Calu3 (cell line): ENCODE measurements at regions of chr18 and their contacts with region 1.

Region 1: GRCh38 chr18:8960740-8961657 is 141.5 kb upstream of the NDUFV2 start:
- DNase-seq: peak; percentile 51
- H3K4me3 Mint-ChIP-seq: peak overlapping the region; percentile 35
- H3K27ac Mint-ChIP-seq: peak overlapping the region; percentile 96
- H3K4me1 Mint-ChIP-seq: peaks cover 60% of the 10 kb centered on the region
- H3K27me3 Mint-ChIP-seq: no peaks in the 10 kb centered on the region
- CTCF ChIP-seq: no peak

Region 2: DNA sequence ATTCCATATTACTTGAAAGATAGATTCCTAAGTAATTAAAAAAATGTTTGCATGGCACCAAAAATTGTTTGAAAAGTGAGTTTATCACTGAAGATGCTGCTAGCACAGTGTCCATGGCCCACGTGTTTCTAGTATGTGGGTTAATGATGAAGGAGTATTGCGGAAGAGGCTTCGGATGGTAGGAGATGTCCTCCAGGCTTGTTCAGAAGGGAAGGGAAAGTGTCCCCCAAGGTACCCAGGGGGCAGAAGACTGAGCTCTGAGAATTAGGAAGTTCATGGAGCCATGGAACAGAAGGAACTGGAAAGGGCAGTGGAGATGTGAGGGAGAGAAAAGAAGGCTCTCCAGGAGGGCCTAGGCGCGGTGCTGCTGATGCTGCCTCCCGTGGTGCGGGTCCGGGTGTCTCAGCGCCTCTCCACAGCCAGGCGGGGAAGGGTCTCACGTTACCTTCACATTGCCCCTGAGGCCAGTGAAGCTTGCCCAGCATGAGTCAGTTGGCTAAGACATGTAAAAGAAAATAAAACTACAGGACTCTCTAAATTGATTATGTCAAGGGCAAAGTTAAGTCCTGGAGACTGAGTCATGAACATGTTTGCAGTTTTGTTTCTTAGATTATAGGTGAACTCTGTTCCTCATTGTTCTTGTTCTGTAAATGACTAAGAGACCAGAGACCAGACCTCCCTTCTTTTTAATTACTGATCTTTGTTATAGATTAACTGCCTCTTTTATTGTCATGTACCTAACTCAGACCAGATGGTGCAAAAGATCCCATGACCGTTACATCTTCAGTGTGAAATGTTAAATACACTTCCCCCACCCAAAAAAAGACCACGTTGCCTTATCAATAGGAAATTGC is 166.6 kb before region 1 on chr18:
- CTCF ChIA-PET with region 1: no interaction called
- intact Hi-C with region 1: loop called (anchors 2 kb)
- DNase-seq: peak; percentile 43
- H3K4me3 Mint-ChIP-seq: peak overlapping the region; percentile 7
- H3K27ac Mint-ChIP-seq: peak overlapping the region; percentile 90
- H3K4me1 Mint-ChIP-seq: peaks cover 89% of the 10 kb centered on the region
- H3K27me3 Mint-ChIP-seq: no peaks in the 10 kb centered on the region
- CTCF ChIP-seq: no peak

Region 3: GRCh38 chr18:8890957-8891464 is 70.0 kb before region 1 on chr18:
- CTCF ChIA-PET with region 1: no interaction called
- intact Hi-C with region 1: loop called (anchors 2 kb)
- DNase-seq: peak; percentile 75
- H3K4me3 Mint-ChIP-seq: peak overlapping the region; percentile 48
- H3K27ac Mint-ChIP-seq: peak overlapping the region; percentile 92
- H3K4me1 Mint-ChIP-seq: peaks cover 45% of the 10 kb centered on the region
- H3K27me3 Mint-ChIP-seq: no peaks in the 10 kb centered on the region
- CTCF ChIP-seq: no peak